Right ventricle myocardium superior (tissue), 1 donor: ENCODE measurements at regions of chr17 and their contacts with region 1.

Region 1: DNA sequence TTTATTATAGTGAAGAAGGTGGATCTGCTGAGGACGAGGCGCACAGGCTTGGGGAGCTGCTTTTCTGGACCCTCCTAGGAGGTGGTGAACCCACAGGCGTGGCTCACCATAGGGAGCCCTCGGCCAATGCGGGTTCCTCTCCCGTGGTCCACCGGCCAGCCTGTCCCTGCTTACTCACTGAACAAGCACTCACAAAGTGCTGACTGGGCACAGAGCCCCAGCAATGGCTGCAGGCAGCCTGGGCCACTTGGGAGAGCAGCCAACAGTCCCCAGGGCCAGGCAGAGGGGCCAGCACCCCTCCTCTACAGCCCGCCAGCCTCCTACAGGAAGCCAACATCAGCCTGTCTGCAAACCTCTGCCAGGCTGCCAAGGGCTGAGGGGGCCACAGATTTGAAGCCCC is 19.1 kb upstream of the NCBP3 start:
- DNase-seq: no peak
- ATAC-seq: peak; percentile 60

Region 2: DNA sequence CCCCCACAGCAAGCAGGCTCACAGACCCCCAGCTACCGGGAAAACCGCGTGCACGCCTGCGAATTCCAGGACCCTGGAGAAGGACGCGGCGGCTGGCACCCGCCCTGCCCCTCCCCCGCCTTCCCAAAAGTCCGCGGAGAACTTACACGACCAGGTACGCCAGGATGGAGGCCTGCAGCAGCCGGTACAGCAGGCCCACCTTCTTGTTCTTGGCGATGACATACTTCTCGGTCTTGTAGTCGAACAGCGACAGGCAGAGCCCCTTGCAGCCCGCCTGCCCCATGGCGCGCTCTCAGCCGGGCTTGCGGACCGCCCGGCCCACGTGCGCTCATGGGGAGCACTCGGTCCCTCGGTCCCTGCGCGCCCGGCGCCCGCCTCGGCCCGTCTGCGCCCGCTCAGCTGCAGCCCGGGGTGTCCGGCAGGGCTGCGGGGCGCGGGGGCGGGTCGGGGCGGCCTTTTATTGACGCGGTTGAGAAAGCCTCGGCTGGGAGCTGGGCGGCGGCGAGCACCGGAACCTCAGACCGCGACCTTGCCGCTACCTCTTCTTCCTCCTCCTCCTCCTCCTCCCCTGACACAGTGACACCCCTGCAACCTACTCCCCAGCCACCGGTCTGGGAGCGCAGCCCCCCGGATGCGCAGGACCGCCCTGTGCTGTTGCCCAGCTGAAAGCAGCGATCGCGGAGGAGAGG is 169.3 kb before region 1 on chr17 and contains the start of gene P2RX5:
- intact Hi-C with region 1: no loop called
- DNase-seq: no peak
- ATAC-seq: peak; percentile 67
- total RNA-seq, gene P2RX5: 13.0 TPM

Region 3: GRCh38 chr17:3827124-3827773 is 37.9 kb before region 1 on chr17:
- intact Hi-C with region 1: no loop called
- DNase-seq: no peak
- ATAC-seq: no peak

Region 4: DNA sequence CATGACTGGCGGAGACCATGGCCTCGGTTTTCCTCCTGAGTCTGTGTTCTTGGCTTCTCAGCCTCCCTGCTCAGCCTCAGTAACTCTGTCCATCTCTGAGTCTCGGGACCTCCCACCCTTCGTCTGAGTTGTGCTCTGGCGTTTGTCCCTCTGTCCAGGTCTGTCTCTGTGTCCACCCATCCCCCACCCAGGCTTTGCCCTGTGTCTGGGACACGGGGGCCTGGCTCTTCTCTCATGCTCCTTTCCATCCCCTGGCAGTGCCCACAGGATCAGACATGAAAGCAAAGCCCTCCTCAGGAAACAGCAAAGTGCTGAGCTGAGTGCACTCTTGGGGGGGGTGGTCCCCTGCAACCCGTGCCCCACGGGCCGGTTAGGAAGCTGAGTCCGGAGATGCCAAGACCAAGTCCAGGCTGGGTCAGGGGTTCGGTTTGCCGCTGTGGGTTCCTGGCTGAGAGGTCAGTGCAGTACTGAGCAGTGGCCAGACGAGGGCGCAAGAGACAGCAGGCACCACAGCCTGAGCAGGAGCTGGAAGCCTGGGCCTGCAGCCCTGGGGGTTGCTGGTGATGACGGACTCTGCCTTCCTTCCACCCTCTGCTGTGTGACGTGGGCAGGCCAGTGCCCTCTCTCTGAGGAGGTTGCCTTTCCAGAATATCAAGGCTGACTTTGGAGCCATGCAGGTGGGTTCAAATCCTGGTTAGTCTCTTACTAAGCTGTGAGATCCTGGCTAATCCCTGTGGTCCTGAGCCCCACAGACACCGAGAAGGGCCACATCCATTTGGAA is 48.5 kb after region 1 on chr17:
- intact Hi-C with region 1: loop called (anchors 5 kb)
- DNase-seq: peak; percentile 89
- ATAC-seq: peak; percentile 84